GM12878 (cell line): ENCODE measurements at regions of chr12 and their contacts with region 1.

Region 1: GRCh38 chr12:103548622-103549601 is 38.2 kb upstream of the STAB2 start:
- DNase-seq: peak; percentile 76
- ATAC-seq: peak; percentile 93
- H3K4me3 ChIP-seq: no peak overlapping the region
- H3K27ac ChIP-seq: peak overlapping the region; percentile 29; the same call in 1 of the 2 replicates
- H3K4me1 ChIP-seq: peaks cover 4% of the 10 kb centered on the region
- H3K27me3 ChIP-seq: no peaks in the 10 kb centered on the region
- CTCF ChIP-seq: peak; percentile 73 to 87 (median 79)
- EP300 ChIP-seq: peak in 1 of 2 experiments; percentile 78; a peak in 1 of 4 replicates
- POLR2A ChIP-seq: no peak
- RAD21 ChIP-seq: peak; percentile 99

Region 2: GRCh38 chr12:102769319-102769916 is 779.5 kb before region 1 on chr12:
- CTCF ChIA-PET with region 1: interaction called, 6 read pairs
- POLR2A ChIA-PET with region 1: no interaction called
- RAD21 ChIA-PET with region 1: no interaction called
- SMC1A ChIA-PET with region 1: interaction called, 15 read pairs
- in situ Hi-C with region 1: no loop called
- intact Hi-C with region 1: no loop called
- DNase-seq: peak; percentile 40
- ATAC-seq: peak; percentile 96
- H3K4me3 ChIP-seq: no peak overlapping the region
- H3K27ac ChIP-seq: no peak overlapping the region
- H3K4me1 ChIP-seq: no peaks in the 10 kb centered on the region
- H3K27me3 ChIP-seq: no peaks in the 10 kb centered on the region
- CTCF ChIP-seq: peak; percentile 80 to 87 (median 82)
- EP300 ChIP-seq: no peak
- POLR2A ChIP-seq: no peak
- RAD21 ChIP-seq: peak; percentile 96

Region 3: DNA sequence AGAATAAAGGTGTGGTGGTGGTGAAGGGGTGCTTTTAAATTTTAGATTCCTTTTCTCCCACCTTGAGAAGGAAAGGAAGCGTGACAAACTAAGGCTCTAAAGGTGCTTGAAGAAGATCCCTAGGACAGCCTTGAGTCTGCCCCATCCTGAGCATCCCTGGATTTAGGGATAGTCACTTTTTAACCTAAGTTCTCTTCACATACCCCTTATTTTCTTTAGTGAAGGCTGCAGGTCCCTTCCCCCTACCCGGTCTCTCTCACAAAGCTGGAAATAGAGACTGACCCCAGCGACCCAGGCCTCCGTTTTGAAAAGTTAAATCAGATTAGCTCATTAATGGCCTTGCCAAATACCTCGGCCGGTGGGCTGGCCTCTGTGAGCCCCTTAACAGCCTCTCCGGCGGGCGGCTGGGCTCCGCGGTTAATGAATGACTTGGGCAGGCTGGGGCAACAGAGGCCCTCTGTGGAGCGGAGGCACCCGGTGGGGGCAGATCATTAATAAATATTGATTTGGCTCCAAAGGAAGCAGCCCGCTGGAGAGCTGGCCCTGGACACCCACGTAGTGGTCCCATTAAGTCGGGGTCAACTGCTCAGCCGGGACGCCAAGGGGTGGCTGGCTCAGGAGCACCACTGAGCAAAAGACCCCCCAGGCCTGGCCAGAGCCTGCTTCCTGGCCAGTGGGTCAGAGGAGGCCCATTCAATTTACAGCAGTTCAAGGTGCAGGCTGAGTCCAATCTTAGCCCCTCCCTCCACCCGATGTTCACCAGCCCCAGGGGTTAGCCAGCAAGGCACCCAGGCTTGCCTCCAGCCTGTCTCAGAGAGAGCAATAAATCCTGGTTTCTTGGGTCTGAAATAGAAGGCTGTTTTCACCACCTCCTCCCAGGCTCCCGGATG is 663.6 kb before region 1 on chr12:
- CTCF ChIA-PET with region 1: interaction called, 203 read pairs
- POLR2A ChIA-PET with region 1: interaction called, 4 read pairs
- RAD21 ChIA-PET with region 1: interaction called, 83 read pairs
- SMC1A ChIA-PET with region 1: interaction called, 157 read pairs
- in situ Hi-C with region 1: loop called (anchors 5 kb)
- intact Hi-C with region 1: loop called (anchors 1 kb)
- DNase-seq: no peak
- ATAC-seq: no peak
- H3K4me3 ChIP-seq: no peak overlapping the region
- H3K27ac ChIP-seq: no peak overlapping the region
- H3K4me1 ChIP-seq: no peaks in the 10 kb centered on the region
- H3K27me3 ChIP-seq: no peaks in the 10 kb centered on the region
- CTCF ChIP-seq: no peak
- EP300 ChIP-seq: no peak
- POLR2A ChIP-seq: no peak
- RAD21 ChIP-seq: no peak

Region 4: GRCh38 chr12:102958073-102958829 is 590.7 kb before region 1 on chr12:
- CTCF ChIA-PET with region 1: interaction called, 7 read pairs
- POLR2A ChIA-PET with region 1: no interaction called
- RAD21 ChIA-PET with region 1: interaction called, 121 read pairs
- SMC1A ChIA-PET with region 1: interaction called, 23 read pairs
- in situ Hi-C with region 1: no loop called
- intact Hi-C with region 1: no loop called
- DNase-seq: no peak
- ATAC-seq: peak; percentile 72
- H3K4me3 ChIP-seq: peak overlapping the region; percentile 81
- H3K27ac ChIP-seq: no peak overlapping the region
- H3K4me1 ChIP-seq: peaks cover 8% of the 10 kb centered on the region
- H3K27me3 ChIP-seq: peaks cover 0 to 24% of the 10 kb centered on the region in 2 experiments; a peak in 2 of 4 replicates
- CTCF ChIP-seq: peak in 2 of 3 experiments; percentile 7 to 15; a peak in 2 of 6 replicates
- EP300 ChIP-seq: no peak; a peak in 1 of 4 replicates
- POLR2A ChIP-seq: no peak
- RAD21 ChIP-seq: no peak

Region 5: DNA sequence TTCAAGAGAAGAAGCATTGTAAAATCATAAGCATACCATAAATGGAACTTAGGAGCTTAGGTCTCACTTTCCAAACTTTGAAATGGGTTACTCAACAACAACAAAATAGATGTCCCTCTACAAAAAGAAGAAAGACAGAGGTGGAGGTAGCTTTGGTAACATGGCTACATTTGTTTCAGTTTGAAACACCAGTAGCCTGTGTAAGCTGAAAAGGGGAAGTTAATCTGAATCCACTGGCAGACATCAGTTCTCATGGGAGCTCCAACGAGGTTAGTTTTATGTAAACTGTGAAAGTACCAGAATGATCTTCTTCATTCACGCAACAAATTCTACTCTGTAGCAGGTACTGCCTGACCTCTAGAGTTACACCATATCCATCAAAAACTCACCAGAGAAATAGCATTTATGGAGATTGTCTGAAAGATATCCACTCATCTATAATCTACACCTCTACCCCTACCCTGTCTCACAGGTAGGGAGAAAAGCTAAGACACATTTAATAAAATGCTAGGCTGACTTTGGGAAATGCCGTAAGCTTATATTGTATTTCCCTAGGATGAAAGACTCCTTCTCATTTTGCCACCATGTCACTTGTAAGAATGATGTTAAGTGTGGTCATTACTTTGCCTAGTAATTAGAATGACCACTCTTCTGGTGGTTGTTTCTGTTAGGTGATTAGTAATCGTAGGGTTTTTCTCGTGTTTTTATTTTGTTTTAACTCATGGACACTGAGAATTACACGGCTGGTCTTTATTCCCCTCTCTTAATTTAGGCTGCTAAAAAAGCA is 367.4 kb before region 1 on chr12:
- CTCF ChIA-PET with region 1: interaction called, 27 read pairs
- POLR2A ChIA-PET with region 1: no interaction called
- RAD21 ChIA-PET with region 1: interaction called, 15 read pairs
- SMC1A ChIA-PET with region 1: interaction called, 15 read pairs
- in situ Hi-C with region 1: no loop called
- intact Hi-C with region 1: no loop called
- DNase-seq: peak; percentile 88
- ATAC-seq: peak; percentile 96
- H3K4me3 ChIP-seq: no peak overlapping the region
- H3K27ac ChIP-seq: peak overlapping the region; percentile 45; the same call in 1 of the 2 replicates
- H3K4me1 ChIP-seq: no peaks in the 10 kb centered on the region
- H3K27me3 ChIP-seq: no peaks in the 10 kb centered on the region
- CTCF ChIP-seq: peak in 2 of 3 experiments; percentile 6 to 49; a peak in 2 of 6 replicates
- EP300 ChIP-seq: peak in 1 of 2 experiments; percentile 68; a peak in 2 of 4 replicates
- POLR2A ChIP-seq: no peak
- RAD21 ChIP-seq: peak; percentile 71

Region 6: GRCh38 chr12:103495479-103496456 is 53.1 kb before region 1 on chr12 and contains the start of gene C12orf42:
- CTCF ChIA-PET with region 1: interaction called, 228 read pairs
- POLR2A ChIA-PET with region 1: interaction called, 5 read pairs
- RAD21 ChIA-PET with region 1: interaction called, 106 read pairs
- SMC1A ChIA-PET with region 1: interaction called, 334 read pairs
- in situ Hi-C with region 1: no loop called
- intact Hi-C with region 1: loop called (anchors 1 kb)
- DNase-seq: peak; percentile 63
- ATAC-seq: peak; percentile 88
- H3K4me3 ChIP-seq: peak within 1 kb of the TSS; percentile 72
- H3K27ac ChIP-seq: 0 out of 2 replicates have a peak within 1 kb of the TSS, but pooled peaks have one; percentile 12
- H3K4me1 ChIP-seq: peaks cover 8% of the 10 kb centered on the region; the same call in 1 of the 2 replicates
- H3K27me3 ChIP-seq: no peaks in the 10 kb centered on the region
- CTCF ChIP-seq: peak; percentile 70 to 85 (median 71)
- EP300 ChIP-seq: peak in 1 of 2 experiments; percentile 42; a peak in 1 of 4 replicates
- POLR2A ChIP-seq: no peak
- RAD21 ChIP-seq: peak; percentile 81
- polyA plus RNA-seq, gene C12orf42: 1.8 to 1.9 TPM

Region 7: DNA sequence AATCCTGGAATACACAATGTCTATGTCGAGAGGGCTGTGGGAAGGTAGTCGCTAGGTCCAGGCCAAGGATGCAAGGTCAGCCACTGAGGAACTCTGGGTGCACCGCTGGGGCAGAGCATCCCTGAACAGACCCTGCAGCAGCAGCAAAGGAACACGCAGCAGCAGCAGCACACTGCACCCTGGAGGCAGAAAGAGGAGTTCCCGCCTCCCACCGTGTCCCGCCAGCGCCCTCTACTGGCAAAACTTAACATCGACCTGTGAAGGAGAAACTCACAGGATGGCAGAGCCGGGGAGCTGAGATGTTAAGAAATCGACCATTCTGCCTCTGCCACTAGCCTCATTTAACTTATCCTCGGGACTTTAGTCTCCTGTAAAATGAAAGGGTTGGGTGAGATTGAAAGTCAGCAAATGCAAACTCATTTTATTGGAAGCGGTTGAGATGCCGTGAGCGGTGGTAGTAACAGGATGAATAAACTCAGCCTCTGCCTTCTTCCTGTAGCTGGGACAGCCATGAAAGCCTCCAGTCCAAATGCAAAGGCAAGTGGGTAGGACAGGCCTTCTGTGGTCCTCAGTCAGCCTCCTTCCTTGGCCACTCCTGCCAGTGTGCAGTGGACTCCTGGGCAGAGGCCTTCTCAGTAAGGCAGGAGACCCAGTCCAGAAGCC is 83.8 kb after region 1 on chr12:
- CTCF ChIA-PET with region 1: interaction called, 35 read pairs
- POLR2A ChIA-PET with region 1: no interaction called
- RAD21 ChIA-PET with region 1: interaction called, 14 read pairs
- SMC1A ChIA-PET with region 1: interaction called, 25 read pairs
- in situ Hi-C with region 1: no loop called
- intact Hi-C with region 1: no loop called
- DNase-seq: peak; percentile 31
- ATAC-seq: peak; percentile 98
- H3K4me3 ChIP-seq: no peak overlapping the region
- H3K27ac ChIP-seq: no peak overlapping the region
- H3K4me1 ChIP-seq: no peaks in the 10 kb centered on the region
- H3K27me3 ChIP-seq: no peaks in the 10 kb centered on the region; a peak in 1 of 4 replicates
- CTCF ChIP-seq: peak; percentile 100; a peak in 5 of 6 replicates
- EP300 ChIP-seq: no peak
- POLR2A ChIP-seq: no peak
- RAD21 ChIP-seq: peak; percentile 95